ENCODE measurements at regions of chr21 and their contacts with region 1.

Region 1: GRCh38 chr21:40385892-40386599 is 460.9 kb downstream of the DSCAM start:
- DNase-seq: peak; percentile 65
- ATAC-seq: no peak
- H3K4me3 Mint-ChIP-seq: no peak overlapping the region
- H3K27ac Mint-ChIP-seq: no peak overlapping the region
- H3K4me1 Mint-ChIP-seq: no peaks in the 10 kb centered on the region
- H3K27me3 Mint-ChIP-seq: peaks cover 8% of the 10 kb centered on the region
- CTCF ChIP-seq: peak; percentile 83

Region 2: DNA sequence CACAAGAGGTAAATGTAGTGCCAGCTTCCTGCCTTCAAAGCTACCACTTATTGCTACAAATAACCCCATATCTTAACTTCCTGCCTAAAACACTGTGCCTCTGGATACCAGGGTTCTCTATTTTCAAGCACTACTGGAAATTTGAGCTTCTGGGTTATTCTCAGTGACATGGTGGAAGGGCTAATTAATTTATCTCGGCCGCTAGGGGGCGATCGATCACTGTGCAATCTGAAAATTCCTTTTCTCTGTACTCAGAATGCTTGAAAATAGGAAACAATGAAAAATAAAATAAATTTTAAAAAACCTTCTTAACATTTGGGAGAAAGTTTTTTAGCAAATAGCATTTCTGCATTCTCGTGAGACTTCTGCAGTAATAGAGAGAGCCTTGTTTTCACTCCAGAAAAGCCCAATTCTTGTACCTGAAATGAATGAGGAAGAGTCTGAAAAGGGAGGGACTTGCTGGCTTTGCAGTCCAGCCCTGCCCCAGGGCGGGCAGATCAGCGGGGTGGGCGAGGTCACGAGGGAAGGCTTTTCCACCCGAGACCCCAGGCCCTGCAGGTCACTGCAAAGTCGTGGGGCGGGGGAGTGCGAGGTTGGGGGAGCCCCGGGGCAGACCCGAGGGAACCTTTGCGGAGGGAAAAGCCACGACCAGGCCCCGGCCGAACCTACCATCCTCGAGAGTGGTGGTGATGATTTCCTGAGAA is 242.1 kb before region 1 on chr21:
- CTCF ChIA-PET with region 1: interaction called, 4 read pairs
- POLR2A ChIA-PET with region 1: no interaction called
- intact Hi-C with region 1: loop called (anchors 5 kb)
- DNase-seq: peak; percentile 60
- ATAC-seq: no peak
- H3K4me3 Mint-ChIP-seq: no peak overlapping the region
- H3K27ac Mint-ChIP-seq: no peak overlapping the region
- H3K4me1 Mint-ChIP-seq: peaks cover 2% of the 10 kb centered on the region
- H3K27me3 Mint-ChIP-seq: no peaks in the 10 kb centered on the region
- CTCF ChIP-seq: peak; percentile 85

Region 3: GRCh38 chr21:40404396-40404800 is 18.4 kb after region 1 on chr21:
- CTCF ChIA-PET with region 1: no interaction called
- POLR2A ChIA-PET with region 1: no interaction called
- intact Hi-C with region 1: no loop called
- DNase-seq: no peak
- ATAC-seq: no peak
- H3K4me3 Mint-ChIP-seq: no peak overlapping the region
- H3K27ac Mint-ChIP-seq: no peak overlapping the region
- H3K4me1 Mint-ChIP-seq: no peaks in the 10 kb centered on the region
- H3K27me3 Mint-ChIP-seq: no peaks in the 10 kb centered on the region
- CTCF ChIP-seq: no peak

Measured in activated CD8-positive, alpha-beta T cell treated with anti-CD3 and anti-CD28 coated beads for 36 hours (primary cell).